Motor neuron (in vitro differentiated cells): ENCODE measurements at regions of chr10 and their contacts with region 1.

Region 1: GRCh38 chr10:21926949-21927348 is 76.6 kb downstream of the DNAJC1 start:
- ATAC-seq: peak in 4 of 8 experiments; percentile 44 to 66 (median 62)
- H3K4me3 ChIP-seq: no peak overlapping the region
- H3K27ac ChIP-seq: no peak overlapping the region
- H3K4me1 ChIP-seq: no peaks in the 10 kb centered on the region

Region 2: DNA sequence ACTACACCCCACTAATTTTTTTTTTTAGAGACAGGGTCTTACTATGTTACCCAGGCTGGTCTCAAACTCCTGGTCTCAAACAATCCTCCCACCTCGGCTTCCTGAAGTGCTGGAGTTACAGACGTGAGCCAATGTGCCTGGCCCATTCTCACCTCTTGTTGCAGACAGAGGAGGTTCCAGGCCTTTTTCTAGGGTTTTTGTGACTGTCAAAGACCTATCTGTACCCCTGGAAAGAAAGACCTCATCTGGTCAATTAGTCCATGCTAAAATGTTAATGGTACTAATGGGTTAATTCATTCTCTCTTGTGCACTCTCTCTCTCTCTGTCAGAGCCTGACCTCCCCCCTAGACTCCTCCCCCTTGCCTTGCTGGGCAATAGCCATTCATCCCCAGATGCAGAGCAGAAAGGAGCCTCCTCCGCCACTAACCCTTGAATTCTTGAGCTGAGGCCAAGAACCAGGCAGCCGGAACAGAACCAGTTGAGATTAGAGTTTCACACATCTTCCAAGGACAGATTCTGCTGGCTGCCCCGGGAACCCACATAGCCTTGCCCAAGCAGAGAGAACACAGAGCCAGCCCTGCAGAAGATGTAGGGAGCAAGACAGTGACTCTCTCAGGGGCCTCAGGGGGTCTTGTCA is 611.2 kb before region 1 on chr10:
- in situ Hi-C with region 1: loop called in 1 of 9 experiments (anchors 25 kb)
- ATAC-seq: peak; percentile 77 to 91 (median 87)
- H3K4me3 ChIP-seq: no peak overlapping the region
- H3K27ac ChIP-seq: peak overlapping the region in 1 of 2 donors; percentile 66
- H3K4me1 ChIP-seq: peaks cover 27 to 37% of the 10 kb centered on the region in 2 donors

Region 3: GRCh38 chr10:21687266-21688008 is 239.5 kb before region 1 on chr10:
- in situ Hi-C with region 1: no loop called
- ATAC-seq: peak in 6 of 8 experiments; percentile 30 to 94 (median 74)
- H3K4me3 ChIP-seq: no peak overlapping the region
- H3K27ac ChIP-seq: peak overlapping the region in 1 of 2 donors; percentile 58
- H3K4me1 ChIP-seq: peaks cover 8 to 12% of the 10 kb centered on the region in 2 donors

Region 4: GRCh38 chr10:21754410-21755011 is 172.4 kb before region 1 on chr10:
- in situ Hi-C with region 1: loop called in 2 of 9 experiments (anchors 25 kb)
- ATAC-seq: peak in 5 of 8 experiments; percentile 71 to 90 (median 79)
- H3K4me3 ChIP-seq: no peak overlapping the region
- H3K27ac ChIP-seq: no peak overlapping the region
- H3K4me1 ChIP-seq: peaks cover 13 to 23% of the 10 kb centered on the region in 2 donors

Region 5: GRCh38 chr10:22003079-22003913 is 76.3 kb after region 1 on chr10 and contains the start of gene DNAJC1:
- in situ Hi-C with region 1: no loop called
- ATAC-seq: peak; percentile 92 to 98 (median 98)
- H3K4me3 ChIP-seq: peak within 1 kb of the TSS; percentile 51 to 75 (median 58)
- H3K27ac ChIP-seq: peak within 1 kb of the TSS; percentile 89
- H3K4me1 ChIP-seq: peaks cover 11 to 12% of the 10 kb centered on the region in 2 donors
- total RNA-seq, gene DNAJC1: 13.6 to 46.2 (median 28.3) TPM